Activated B cell treated with CpG ODN at 0.5 μM for 24 hours (primary cell): ENCODE measurements at regions of chr11 and their contacts with region 1.

Region 1: DNA sequence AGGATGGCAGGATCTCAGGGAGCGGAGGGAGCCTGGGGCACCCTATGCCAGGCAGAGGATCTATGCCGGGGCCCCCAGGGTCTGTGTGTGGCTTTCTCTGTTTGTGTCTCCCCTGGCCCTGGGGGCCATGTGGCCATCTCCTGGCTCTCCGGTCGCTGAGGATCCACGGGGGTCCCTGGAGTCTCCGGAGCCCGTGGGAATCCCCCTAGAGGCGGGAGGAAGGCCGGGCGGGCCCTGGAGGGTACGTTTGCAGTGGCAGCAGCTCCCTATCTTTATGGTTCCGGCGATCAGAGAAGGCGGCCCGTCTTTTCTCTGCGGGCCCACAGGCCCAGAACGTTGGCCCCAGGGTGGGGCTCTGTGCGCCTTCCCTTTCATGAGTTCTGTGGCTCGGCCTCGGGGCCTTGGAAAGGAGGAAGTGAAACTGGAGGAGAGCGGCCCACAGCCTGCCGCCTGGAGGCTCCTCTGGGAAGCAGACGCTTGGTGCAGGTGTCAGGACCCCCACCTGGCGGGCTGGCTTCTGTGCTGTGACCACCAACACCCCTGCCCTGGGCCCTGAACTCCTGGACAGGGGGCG is 82.1 kb downstream of the KCNQ1 start:
- DNase-seq: peak; percentile 62
- ATAC-seq: peak; percentile 93
- H3K4me3 Mint-ChIP-seq: peak overlapping the region; percentile 80
- H3K27ac Mint-ChIP-seq: peak overlapping the region; percentile 82
- H3K4me1 Mint-ChIP-seq: peaks cover 42% of the 10 kb centered on the region
- H3K27me3 Mint-ChIP-seq: no peaks in the 10 kb centered on the region
- CTCF ChIP-seq: no peak

Region 2: GRCh38 chr11:2376751-2377451 is 150.0 kb before region 1 on chr11 and contains the start of gene CD81:
- CTCF ChIA-PET with region 1: no interaction called
- POLR2A ChIA-PET with region 1: no interaction called
- intact Hi-C with region 1: no loop called
- DNase-seq: peak; percentile 67
- ATAC-seq: peak; percentile 82
- H3K4me3 Mint-ChIP-seq: peak within 1 kb of the TSS; percentile 82
- H3K27ac Mint-ChIP-seq: peak within 1 kb of the TSS; percentile 86
- H3K4me1 Mint-ChIP-seq: peaks cover 38% of the 10 kb centered on the region
- H3K27me3 Mint-ChIP-seq: no peaks in the 10 kb centered on the region
- CTCF ChIP-seq: no peak
- total RNA-seq, gene CD81: 130 and 132 TPM in 2 replicates

Region 3: DNA sequence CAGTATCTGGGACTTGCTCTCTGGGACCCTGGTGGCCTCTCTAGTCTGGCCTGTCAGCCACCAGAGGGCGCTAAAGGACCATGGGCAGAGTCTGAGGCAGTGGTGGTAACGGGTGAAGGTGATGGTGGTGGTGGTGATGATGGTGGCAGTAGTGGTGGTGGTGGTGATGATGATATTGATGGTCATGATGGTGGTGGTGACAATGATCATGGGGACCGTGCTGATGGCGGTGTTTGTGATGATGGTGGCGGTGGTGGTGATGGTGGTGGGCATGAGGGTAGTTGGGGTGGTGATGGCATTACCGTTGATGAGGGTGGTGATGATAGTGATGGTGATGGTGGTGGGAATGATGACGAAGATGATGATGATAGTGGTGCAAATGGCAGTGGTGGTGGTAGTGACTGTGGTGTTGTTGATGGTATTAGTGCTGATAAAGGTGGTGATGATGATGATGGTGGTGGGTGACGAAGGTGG is 98.5 kb before region 1 on chr11:
- CTCF ChIA-PET with region 1: interaction called, 102 read pairs
- POLR2A ChIA-PET with region 1: no interaction called
- intact Hi-C with region 1: loop called (anchors 1 kb)
- DNase-seq: peak; percentile 76
- ATAC-seq: peak; percentile 97
- H3K4me3 Mint-ChIP-seq: no peak overlapping the region
- H3K27ac Mint-ChIP-seq: no peak overlapping the region
- H3K4me1 Mint-ChIP-seq: no peaks in the 10 kb centered on the region
- H3K27me3 Mint-ChIP-seq: no peaks in the 10 kb centered on the region
- CTCF ChIP-seq: peak; percentile 57

Region 4: GRCh38 chr11:2444821-2445745 is 81.8 kb before region 1 on chr11 and contains the start of gene KCNQ1:
- CTCF ChIA-PET with region 1: interaction called, 3 read pairs
- POLR2A ChIA-PET with region 1: interaction called, 5 read pairs
- intact Hi-C with region 1: loop called (anchors 1 kb)
- DNase-seq: peak; percentile 71
- ATAC-seq: peak; percentile 85
- H3K4me3 Mint-ChIP-seq: peak within 1 kb of the TSS; percentile 85
- H3K27ac Mint-ChIP-seq: peak within 1 kb of the TSS; percentile 65
- H3K4me1 Mint-ChIP-seq: peaks cover 38% of the 10 kb centered on the region
- H3K27me3 Mint-ChIP-seq: no peaks in the 10 kb centered on the region
- CTCF ChIP-seq: no peak
- total RNA-seq, gene KCNQ1: 6.5 and 8.6 TPM in 2 replicates